Naive thymus-derived CD4-positive, alpha-beta T cell (primary cell): ENCODE measurements at regions of chr3 and their contacts with region 1.

Region 1: GRCh38 chr3:130892759-130893375 is 1.0 kb upstream of the ATP2C1 start:
- DNase-seq: peak in 8 of 9 donors; percentile 55 to 82 (median 76)
- ATAC-seq: peak; percentile 77
- H3K4me3 ChIP-seq: peak overlapping the region; percentile 96
- H3K4me3 Mint-ChIP-seq: peak overlapping the region; percentile 94 to 99 (median 98)
- H3K27ac ChIP-seq: peak overlapping the region; percentile 93
- H3K27ac Mint-ChIP-seq: peak overlapping the region; percentile 95 to 100 (median 99)
- H3K4me1 ChIP-seq: peaks cover 5 to 14% of the 10 kb centered on the region in 2 donors
- H3K4me1 Mint-ChIP-seq: peaks cover 25 to 45% (median 37%) of the 10 kb centered on the region in 7 donors
- H3K27me3 ChIP-seq: no peaks in the 10 kb centered on the region
- H3K27me3 Mint-ChIP-seq: peaks cover 0 to 4% (median 0%) of the 10 kb centered on the region in 5 donors

Region 2: DNA sequence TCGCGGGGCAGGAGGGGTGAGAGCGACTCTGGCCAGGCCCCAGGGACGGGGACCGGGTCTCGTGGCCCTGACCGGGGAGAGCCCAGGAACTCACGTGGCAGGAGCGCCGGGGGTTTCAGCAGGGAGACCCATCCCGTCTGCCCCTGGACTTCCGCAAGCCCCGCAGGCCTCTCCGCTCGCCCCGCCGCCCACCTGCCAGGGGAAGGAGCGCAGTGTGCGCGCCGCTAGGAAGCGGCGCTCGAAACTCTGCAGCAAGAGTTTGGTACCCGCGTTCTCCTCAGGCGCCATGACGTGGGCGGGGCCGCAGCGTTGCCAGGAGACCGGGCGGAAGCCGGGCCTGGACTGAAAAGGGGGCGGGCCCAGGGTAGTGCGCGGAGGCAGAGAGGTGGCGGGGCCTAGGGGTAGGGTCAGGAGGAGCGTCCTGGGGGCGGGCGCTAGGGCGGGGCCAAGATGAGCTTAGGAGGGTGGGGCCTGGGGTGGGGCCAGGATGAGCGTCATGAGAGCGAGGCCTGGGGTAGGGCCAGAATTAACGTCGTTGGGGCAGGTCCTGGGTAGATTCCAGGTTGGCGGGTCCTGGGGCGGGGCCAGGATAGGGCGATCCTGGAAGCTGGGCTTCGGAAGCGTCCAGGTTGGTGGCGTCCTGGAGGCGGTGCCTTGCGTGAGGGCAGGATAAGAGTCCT is 781.5 kb before region 1 on chr3:
- CTCF ChIA-PET with region 1: no interaction called
- POLR2A ChIA-PET with region 1: no interaction called
- intact Hi-C with region 1: loop called in 1 of 2 experiments (anchors 1 kb)
- DNase-seq: peak; percentile 96 to 99 (median 98)
- ATAC-seq: peak; percentile 100
- H3K4me3 ChIP-seq: peak overlapping the region; percentile 58
- H3K4me3 Mint-ChIP-seq: peak overlapping the region; percentile 85 to 100 (median 98)
- H3K27ac ChIP-seq: peak overlapping the region; percentile 90
- H3K27ac Mint-ChIP-seq: peak overlapping the region; percentile 91 to 100 (median 100)
- H3K4me1 ChIP-seq: no peaks in the 10 kb centered on the region
- H3K4me1 Mint-ChIP-seq: peaks cover 11 to 22% (median 13%) of the 10 kb centered on the region in 7 donors
- H3K27me3 ChIP-seq: no peaks in the 10 kb centered on the region
- H3K27me3 Mint-ChIP-seq: peaks cover 0 to 14% (median 0%) of the 10 kb centered on the region in 5 donors

Region 3: DNA sequence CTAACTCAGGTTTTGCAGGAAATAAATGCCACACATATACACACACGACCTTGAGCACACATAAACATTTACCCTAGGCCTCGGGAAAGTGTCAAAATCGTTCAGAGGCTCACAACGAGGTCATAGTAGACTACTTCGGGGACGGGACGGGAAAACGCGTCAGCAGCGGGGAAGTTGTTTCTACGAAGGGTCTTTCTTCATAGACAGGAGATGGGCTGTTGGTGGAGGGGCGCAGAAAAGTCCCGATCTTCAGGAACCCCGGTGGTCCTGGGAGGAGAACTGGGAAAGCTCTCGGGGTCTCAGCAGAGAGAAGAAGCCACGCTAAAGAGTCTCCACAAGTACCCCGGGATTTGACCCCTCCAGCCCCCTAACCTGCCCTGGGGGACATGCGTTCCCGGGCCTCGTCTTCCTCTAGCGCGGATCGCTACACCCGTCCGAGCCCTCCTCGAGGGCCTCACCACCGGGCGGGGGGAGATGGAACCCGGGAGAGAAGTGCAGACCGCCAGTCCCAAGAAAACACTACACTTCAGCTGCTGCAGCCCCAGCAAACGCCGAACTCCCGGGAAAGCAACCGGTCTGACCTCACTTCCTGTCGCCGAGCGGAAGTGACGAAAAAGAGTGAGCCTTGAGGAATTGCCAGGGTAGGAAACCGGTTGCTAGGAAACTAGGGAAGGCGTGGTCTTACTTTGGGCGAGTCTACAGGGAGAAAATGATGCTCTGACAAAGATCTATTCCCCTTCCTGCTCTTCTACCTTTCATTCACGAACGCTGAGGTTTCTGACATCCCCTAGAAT is 146.4 kb before region 1 on chr3 and contains the start of gene PIK3R4:
- CTCF ChIA-PET with region 1: interaction called, 6 read pairs
- POLR2A ChIA-PET with region 1: interaction called, 5 read pairs
- intact Hi-C with region 1: loop called (anchors 1 kb)
- DNase-seq: peak; percentile 79 to 98 (median 92)
- ATAC-seq: peak; percentile 87
- H3K4me3 ChIP-seq: peak within 1 kb of the TSS; percentile 87
- H3K4me3 Mint-ChIP-seq: peak within 1 kb of the TSS in 9 of 10 donors; percentile 82 to 97 (median 93)
- H3K27ac ChIP-seq: peak within 1 kb of the TSS; percentile 89
- H3K27ac Mint-ChIP-seq: peak within 1 kb of the TSS; percentile 89 to 99 (median 94)
- H3K4me1 ChIP-seq: peaks cover 5 to 20% of the 10 kb centered on the region in 2 donors
- H3K4me1 Mint-ChIP-seq: peaks cover 35 to 62% (median 50%) of the 10 kb centered on the region in 7 donors
- H3K27me3 ChIP-seq: no peaks in the 10 kb centered on the region
- H3K27me3 Mint-ChIP-seq: peaks cover 0 to 3% (median 0%) of the 10 kb centered on the region in 5 donors
- total RNA-seq, gene PIK3R4: 15.5 to 33.6 (median 27.3) TPM

Region 4: DNA sequence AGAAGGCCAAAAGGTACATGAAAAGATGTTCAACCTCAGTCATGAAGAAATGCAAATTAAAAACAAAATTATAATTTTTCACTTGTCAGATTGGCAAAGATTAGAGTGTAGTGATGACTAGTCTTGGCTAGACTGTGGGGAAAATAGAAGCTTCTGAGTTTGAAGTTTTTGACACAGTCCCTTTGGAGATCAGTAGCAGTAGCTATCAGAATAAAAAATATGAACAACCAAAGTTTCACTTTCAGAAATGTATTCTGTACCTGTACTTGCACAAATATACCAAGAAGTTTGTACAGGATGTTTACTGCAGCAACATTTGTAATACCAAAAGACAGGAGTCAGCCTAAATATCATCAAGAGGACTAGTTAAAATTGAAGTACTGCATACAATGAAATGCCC is 15.1 kb after region 1 on chr3:
- CTCF ChIA-PET with region 1: no interaction called
- POLR2A ChIA-PET with region 1: no interaction called
- intact Hi-C with region 1: loop called in 1 of 2 experiments (anchors 1 kb)
- DNase-seq: no peak
- ATAC-seq: peak; percentile 20
- H3K4me3 ChIP-seq: no peak overlapping the region
- H3K4me3 Mint-ChIP-seq: peak overlapping the region in 3 of 10 donors; percentile 8 to 67 (median 10)
- H3K27ac ChIP-seq: no peak overlapping the region
- H3K27ac Mint-ChIP-seq: peak overlapping the region in 3 of 9 donors; percentile 5 to 82 (median 19)
- H3K4me1 ChIP-seq: peaks cover 6 to 12% of the 10 kb centered on the region in 2 donors
- H3K4me1 Mint-ChIP-seq: peaks cover 30 to 63% (median 48%) of the 10 kb centered on the region in 7 donors
- H3K27me3 ChIP-seq: no peaks in the 10 kb centered on the region
- H3K27me3 Mint-ChIP-seq: no peaks in the 10 kb centered on the region

Region 5: DNA sequence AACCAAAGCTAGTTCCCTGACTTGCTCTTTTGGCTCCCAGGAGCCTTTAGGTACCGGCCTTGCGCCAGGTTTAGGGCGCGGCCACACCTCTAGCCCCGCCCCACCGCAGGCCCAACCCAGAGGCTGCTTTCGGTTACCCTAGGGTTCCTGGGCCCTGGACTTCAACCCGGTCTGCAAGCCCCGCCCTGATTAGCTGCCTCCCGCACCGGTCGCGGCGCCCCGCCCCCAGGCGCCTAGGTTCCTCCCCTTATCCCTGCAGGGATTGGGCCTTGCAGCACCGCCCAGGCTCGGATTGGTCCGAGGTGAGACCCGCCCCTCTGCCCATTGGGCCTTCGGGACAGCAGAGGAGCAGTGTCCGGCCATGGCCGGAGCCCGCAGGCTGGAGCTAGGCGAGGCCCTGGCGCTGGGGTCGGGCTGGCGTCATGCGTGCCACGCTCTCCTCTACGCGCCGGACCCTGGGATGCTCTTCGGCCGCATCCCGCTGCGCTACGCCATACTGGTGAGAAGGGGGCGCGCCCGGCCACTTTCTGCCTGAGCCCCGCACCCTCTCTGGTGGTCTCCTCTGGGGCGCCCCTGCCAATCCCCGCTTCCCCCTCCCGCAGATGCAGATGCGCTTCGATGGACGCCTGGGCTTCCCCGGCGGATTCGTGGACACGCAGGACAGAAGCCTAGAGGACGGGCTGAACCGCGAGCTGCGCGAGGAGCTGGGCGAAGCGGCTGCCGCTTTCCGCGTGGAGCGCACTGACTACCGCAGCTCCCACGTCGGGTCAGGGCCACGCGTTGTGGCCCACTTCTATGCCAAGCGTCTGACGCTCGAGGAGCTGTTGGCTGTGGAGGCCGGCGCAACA is 488.8 kb after region 1 on chr3 and contains the start of gene NUDT16:
- CTCF ChIA-PET with region 1: no interaction called
- POLR2A ChIA-PET with region 1: no interaction called
- intact Hi-C with region 1: loop called (anchors 1 kb)
- DNase-seq: peak; percentile 86 to 97 (median 91)
- ATAC-seq: peak; percentile 99
- H3K4me3 ChIP-seq: peak within 1 kb of the TSS; percentile 90
- H3K4me3 Mint-ChIP-seq: peak within 1 kb of the TSS; percentile 93 to 98 (median 96)
- H3K27ac ChIP-seq: peak within 1 kb of the TSS; percentile 69
- H3K27ac Mint-ChIP-seq: peak within 1 kb of the TSS; percentile 90 to 98 (median 95)
- H3K4me1 ChIP-seq: peaks cover 6 to 14% of the 10 kb centered on the region in 2 donors
- H3K4me1 Mint-ChIP-seq: peaks cover 30 to 51% (median 42%) of the 10 kb centered on the region in 7 donors
- H3K27me3 ChIP-seq: no peaks in the 10 kb centered on the region
- H3K27me3 Mint-ChIP-seq: no peaks in the 10 kb centered on the region
- total RNA-seq, gene NUDT16: 7.1 to 14.5 (median 12.9) TPM

Region 6: DNA sequence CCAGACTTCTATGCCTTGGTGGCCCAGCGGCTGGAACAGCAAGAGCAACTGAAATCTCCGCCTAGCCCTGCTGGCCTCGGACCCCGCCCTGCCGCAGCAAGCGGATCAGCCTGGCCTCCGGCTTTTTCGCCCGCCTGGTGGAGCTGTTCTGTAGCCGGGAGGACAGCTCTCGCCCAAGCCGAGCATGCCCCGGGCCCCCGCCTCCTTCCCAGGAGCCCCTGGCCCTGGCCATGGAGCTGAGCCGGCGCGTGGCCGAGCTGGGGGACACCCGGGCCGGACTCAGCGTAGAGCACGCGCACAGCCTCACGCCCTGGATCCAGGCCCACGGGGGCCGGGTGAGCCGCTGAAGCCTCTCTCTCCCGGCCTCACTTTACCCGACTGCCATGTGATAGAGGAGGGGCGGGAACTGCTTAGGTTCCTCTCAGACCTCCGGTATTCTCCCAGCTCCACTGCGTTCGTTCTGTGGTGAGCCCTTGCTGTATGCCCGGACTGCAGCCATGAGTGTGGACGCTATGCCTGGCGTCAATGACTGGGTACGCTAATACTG is 634.0 kb after region 1 on chr3:
- CTCF ChIA-PET with region 1: no interaction called
- POLR2A ChIA-PET with region 1: no interaction called
- intact Hi-C with region 1: no loop called
- DNase-seq: peak in 1 of 9 donors; percentile 24
- ATAC-seq: no peak
- H3K4me3 ChIP-seq: no peak overlapping the region
- H3K4me3 Mint-ChIP-seq: peak overlapping the region in 1 of 10 donors; percentile 20
- H3K27ac ChIP-seq: no peak overlapping the region
- H3K27ac Mint-ChIP-seq: no peak overlapping the region
- H3K4me1 ChIP-seq: no peaks in the 10 kb centered on the region
- H3K4me1 Mint-ChIP-seq: peaks cover 0 to 5% (median 4%) of the 10 kb centered on the region in 7 donors
- H3K27me3 ChIP-seq: no peaks in the 10 kb centered on the region
- H3K27me3 Mint-ChIP-seq: peaks cover 38 to 59% (median 45%) of the 10 kb centered on the region in 5 donors

Region 7: GRCh38 chr3:132659365-132660051 is 1766.6 kb after region 1 on chr3 and contains the start of gene ACAD11:
- CTCF ChIA-PET with region 1: no interaction called
- POLR2A ChIA-PET with region 1: no interaction called
- intact Hi-C with region 1: loop called in 1 of 2 experiments (anchors 5 kb)
- DNase-seq: peak in 7 of 9 donors; percentile 2 to 55 (median 18)
- ATAC-seq: peak; percentile 54
- H3K4me3 ChIP-seq: peak within 1 kb of the TSS; percentile 99
- H3K4me3 Mint-ChIP-seq: peak within 1 kb of the TSS; percentile 84 to 98 (median 97)
- H3K27ac ChIP-seq: peak within 1 kb of the TSS; percentile 92
- H3K27ac Mint-ChIP-seq: peak within 1 kb of the TSS; percentile 95 to 98 (median 96)
- H3K4me1 ChIP-seq: peaks cover 9 to 19% of the 10 kb centered on the region in 2 donors
- H3K4me1 Mint-ChIP-seq: peaks cover 42 to 78% (median 67%) of the 10 kb centered on the region in 7 donors
- H3K27me3 ChIP-seq: no peaks in the 10 kb centered on the region
- H3K27me3 Mint-ChIP-seq: no peaks in the 10 kb centered on the region
- total RNA-seq, gene ACAD11: 15.0 to 33.7 (median 27.5) TPM